Activated CD4-positive, alpha-beta memory T cell treated with anti-CD3 and anti-CD28 coated beads, Interleukin-2, amount 10 ng/mL, durations not matched to agents 7 days and 5 days (primary cell): ENCODE measurements at regions of chr7 and their contacts with region 1.

Region 1: GRCh38 chr7:77798394-77799077 is at the starts of genes PHTF2 and TMEM60:
- DNase-seq: peak; percentile 97
- H3K4me3 Mint-ChIP-seq: peak within 1 kb of the TSS; percentile 92
- H3K27ac Mint-ChIP-seq: peak within 1 kb of the TSS; percentile 87
- H3K4me1 Mint-ChIP-seq: peaks cover 68% of the 10 kb centered on the region
- H3K27me3 Mint-ChIP-seq: no peaks in the 10 kb centered on the region
- total RNA-seq, gene PHTF2: 70.4 to 71.7 TPM
- total RNA-seq, gene TMEM60: 25.0 to 25.4 TPM

Region 2: GRCh38 chr7:77696198-77697028 is 102.1 kb before region 1 on chr7 and contains the start of gene RSBN1L:
- CTCF ChIA-PET with region 1: interaction called, 7 read pairs
- POLR2A ChIA-PET with region 1: interaction called, 23 read pairs
- DNase-seq: peak; percentile 99
- H3K4me3 Mint-ChIP-seq: peak within 1 kb of the TSS; percentile 98
- H3K27ac Mint-ChIP-seq: peak within 1 kb of the TSS; percentile 94
- H3K4me1 Mint-ChIP-seq: peaks cover 51% of the 10 kb centered on the region
- H3K27me3 Mint-ChIP-seq: no peaks in the 10 kb centered on the region
- total RNA-seq, gene RSBN1L: 28.7 to 29.5 TPM

Region 3: DNA sequence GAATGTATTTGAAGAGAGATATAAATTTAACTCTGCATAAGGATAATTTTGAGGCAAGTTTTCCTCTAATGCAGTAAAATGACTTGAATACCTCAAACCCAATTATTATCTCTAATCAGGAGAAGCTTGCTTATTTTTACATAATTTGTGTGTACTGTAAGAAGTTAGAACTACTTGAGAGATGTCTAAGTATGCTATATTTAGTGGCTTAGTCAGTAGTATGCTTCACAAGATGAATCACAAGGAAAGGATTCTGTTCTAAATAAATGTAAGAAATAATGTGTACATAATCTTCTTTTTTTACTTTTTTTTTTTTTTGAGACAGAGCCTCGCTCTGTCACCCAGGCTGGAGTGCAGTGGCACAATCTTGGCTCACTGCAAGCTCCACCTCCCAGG is 13.8 kb after region 1 on chr7:
- CTCF ChIA-PET with region 1: no interaction called
- POLR2A ChIA-PET with region 1: interaction called, 17 read pairs
- DNase-seq: no peak
- H3K4me3 Mint-ChIP-seq: no peak overlapping the region
- H3K27ac Mint-ChIP-seq: no peak overlapping the region
- H3K4me1 Mint-ChIP-seq: peaks cover 44% of the 10 kb centered on the region
- H3K27me3 Mint-ChIP-seq: no peaks in the 10 kb centered on the region

Region 4: GRCh38 chr7:77830649-77831355 is 32.3 kb after region 1 on chr7:
- CTCF ChIA-PET with region 1: interaction called, 13 read pairs
- POLR2A ChIA-PET with region 1: interaction called, 50 read pairs
- DNase-seq: no peak
- H3K4me3 Mint-ChIP-seq: no peak overlapping the region
- H3K27ac Mint-ChIP-seq: peak overlapping the region; percentile 84
- H3K4me1 Mint-ChIP-seq: peaks cover 72% of the 10 kb centered on the region
- H3K27me3 Mint-ChIP-seq: no peaks in the 10 kb centered on the region

Region 5: DNA sequence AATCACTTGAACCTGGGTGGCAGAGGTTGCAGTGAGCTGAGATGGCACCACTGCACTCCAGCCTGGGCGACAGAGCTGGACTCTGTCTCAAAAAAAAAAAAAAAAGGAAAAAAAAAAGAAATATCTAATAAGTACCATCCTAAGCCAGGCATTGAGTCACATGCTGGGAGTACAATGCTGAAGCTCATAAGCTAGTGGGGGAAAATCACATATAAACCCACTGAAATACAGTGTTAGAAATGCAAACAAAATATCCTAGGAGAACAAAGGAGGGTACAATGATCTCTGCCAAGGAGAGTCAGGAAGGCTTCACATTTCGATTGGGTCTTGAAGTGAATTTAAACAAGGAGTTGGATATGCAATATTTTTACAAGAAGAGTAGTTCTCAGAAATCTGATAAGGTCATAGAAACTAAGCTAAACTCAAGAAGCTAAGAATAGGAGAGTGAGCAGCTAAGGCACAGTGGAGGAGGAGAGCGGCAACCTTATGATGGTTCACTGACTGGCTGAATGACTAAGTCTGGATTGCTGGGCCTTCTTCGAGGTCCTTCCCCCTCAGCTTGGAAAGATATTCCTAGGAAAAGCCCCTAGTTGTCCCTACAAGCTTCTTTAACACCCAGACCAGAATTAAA is 115.6 kb after region 1 on chr7:
- CTCF ChIA-PET with region 1: interaction called, 7 read pairs
- POLR2A ChIA-PET with region 1: interaction called, 16 read pairs
- DNase-seq: no peak
- H3K4me3 Mint-ChIP-seq: peak overlapping the region; percentile 2
- H3K27ac Mint-ChIP-seq: peak overlapping the region; percentile 67
- H3K4me1 Mint-ChIP-seq: peaks cover 30% of the 10 kb centered on the region
- H3K27me3 Mint-ChIP-seq: no peaks in the 10 kb centered on the region